ENCODE measurements at regions of chr1 and their contacts with region 1.

Region 1: GRCh38 chr1:28359592-28360239 is 9.8 kb upstream of the PHACTR4 start:
- DNase-seq: peak in 1 of 2 experiments; percentile 76
- H3K4me3 ChIP-seq: no peak overlapping the region
- H3K27ac ChIP-seq: no peak overlapping the region
- H3K4me1 ChIP-seq: peaks cover 0 to 3% (median 0%) of the 10 kb centered on the region in 4 experiments; a peak in 1 of 7 replicates
- H3K27me3 ChIP-seq: no peaks in the 10 kb centered on the region
- CTCF ChIP-seq: peak in 2 of 3 experiments; percentile 54 to 66; a peak in 2 of 4 replicates
- EP300 ChIP-seq: no peak
- POLR2A ChIP-seq: no peak
- RAD21 ChIP-seq: peak; percentile 64 to 71

Region 2: DNA sequence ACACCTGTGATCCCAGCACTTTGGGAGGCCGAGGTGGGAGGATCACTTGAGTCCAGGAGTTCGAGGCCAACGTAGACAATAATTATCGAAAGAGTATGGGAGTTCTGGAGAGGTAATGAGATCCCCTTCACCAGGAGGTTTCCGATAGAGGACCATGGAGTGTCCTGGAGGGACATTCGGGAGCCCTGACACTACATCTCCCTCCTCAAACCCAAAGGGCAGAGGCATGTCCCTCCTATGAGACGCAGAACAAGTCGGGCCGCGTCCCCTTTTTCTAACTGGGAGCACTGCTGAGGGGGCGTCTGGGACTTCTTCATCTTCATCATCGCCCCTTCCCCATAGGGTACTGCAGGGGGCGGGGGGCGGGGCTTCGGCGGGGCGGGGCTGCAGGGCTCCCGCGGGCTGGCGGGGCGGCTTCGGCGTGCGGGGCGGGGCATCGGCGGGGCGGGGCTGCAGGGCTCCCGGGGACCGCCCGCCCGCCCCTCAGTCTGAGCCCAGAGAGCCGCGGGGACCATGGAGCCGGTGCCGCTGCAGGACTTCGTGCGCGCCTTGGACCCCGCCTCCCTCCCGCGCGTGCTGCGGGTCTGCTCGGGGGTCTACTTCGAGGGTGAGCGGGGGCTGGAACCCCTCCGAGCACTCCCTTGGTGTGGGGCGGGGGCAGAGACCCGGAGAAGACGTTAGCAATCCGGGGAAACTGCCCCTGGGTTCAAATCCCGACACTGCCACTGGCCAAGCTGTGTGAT is 487.5 kb before region 1 on chr1 and contains the start of gene THEMIS2:
- CTCF ChIA-PET with region 1: no interaction called
- POLR2A ChIA-PET with region 1: no interaction called
- DNase-seq: peak in 1 of 2 experiments; percentile 88
- H3K4me3 ChIP-seq: peak within 1 kb of the TSS; percentile 54 to 91 (median 84)
- H3K27ac ChIP-seq: no peak within 1 kb of the TSS
- H3K4me1 ChIP-seq: peaks cover 0 to 12% (median 8%) of the 10 kb centered on the region in 4 experiments; a peak in 6 of 7 replicates
- H3K27me3 ChIP-seq: peaks cover 0 to 6% (median 2%) of the 10 kb centered on the region in 4 experiments; a peak in 4 of 7 replicates
- CTCF ChIP-seq: no peak
- EP300 ChIP-seq: no peak
- POLR2A ChIP-seq: peak in 1 of 2 experiments; percentile 24; a peak in 1 of 3 replicates
- RAD21 ChIP-seq: no peak
- total RNA-seq, gene THEMIS2: 12.4 and 17.3 TPM in 2 replicates

Region 3: DNA sequence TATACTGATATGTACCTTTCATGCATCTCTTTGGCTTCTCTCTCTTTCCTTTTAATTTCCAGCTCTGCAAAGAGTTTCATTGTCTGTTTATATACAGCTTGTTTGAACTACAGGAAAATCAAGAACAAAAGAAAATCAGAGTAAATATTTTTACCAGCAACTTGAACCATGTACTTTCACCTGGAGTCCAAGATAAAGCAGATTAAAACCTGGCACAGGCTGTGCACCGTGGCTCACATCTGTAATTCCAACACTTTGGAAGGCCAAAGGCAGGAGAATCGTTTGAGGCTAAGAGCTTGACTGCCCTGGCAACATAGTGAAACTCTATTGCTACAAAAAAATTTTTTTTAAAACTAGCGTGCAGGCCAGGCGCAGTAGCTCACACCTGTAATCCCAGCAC is 154.5 kb before region 1 on chr1:
- CTCF ChIA-PET with region 1: no interaction called
- POLR2A ChIA-PET with region 1: no interaction called
- DNase-seq: no peak
- H3K4me3 ChIP-seq: no peak overlapping the region
- H3K27ac ChIP-seq: no peak overlapping the region
- H3K4me1 ChIP-seq: no peaks in the 10 kb centered on the region; a peak in 1 of 7 replicates
- H3K27me3 ChIP-seq: no peaks in the 10 kb centered on the region
- CTCF ChIP-seq: no peak
- EP300 ChIP-seq: no peak
- POLR2A ChIP-seq: no peak
- RAD21 ChIP-seq: no peak

Region 4: GRCh38 chr1:28341591-28341990 is 18.1 kb before region 1 on chr1:
- CTCF ChIA-PET with region 1: interaction called, 14 read pairs
- POLR2A ChIA-PET with region 1: interaction called, 3 read pairs
- DNase-seq: no peak
- H3K4me3 ChIP-seq: no peak overlapping the region
- H3K27ac ChIP-seq: no peak overlapping the region
- H3K4me1 ChIP-seq: no peaks in the 10 kb centered on the region
- H3K27me3 ChIP-seq: no peaks in the 10 kb centered on the region
- CTCF ChIP-seq: no peak
- EP300 ChIP-seq: no peak
- POLR2A ChIP-seq: no peak
- RAD21 ChIP-seq: no peak

Region 5: DNA sequence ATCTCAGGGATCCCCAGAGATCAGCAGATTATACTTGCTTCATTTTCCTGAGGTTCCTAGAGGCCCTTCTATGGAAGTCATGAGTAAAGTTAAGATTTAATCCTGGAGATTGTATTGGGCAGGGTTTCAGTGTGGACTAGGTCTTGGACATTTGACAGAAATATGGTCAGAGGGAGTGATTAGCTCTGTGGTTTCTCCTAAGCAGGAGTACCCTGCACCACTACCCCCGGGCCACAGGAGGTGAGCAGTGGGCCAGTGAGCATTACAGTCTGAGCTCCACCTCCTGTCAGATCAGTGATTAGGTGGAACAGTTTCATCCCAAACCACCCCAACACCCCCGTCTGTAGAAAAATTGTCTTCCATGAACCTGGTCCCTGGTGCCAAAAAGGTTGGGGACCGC is 53.0 kb after region 1 on chr1:
- CTCF ChIA-PET with region 1: interaction called, 10 read pairs
- POLR2A ChIA-PET with region 1: no interaction called
- DNase-seq: no peak
- H3K4me3 ChIP-seq: no peak overlapping the region
- H3K27ac ChIP-seq: no peak overlapping the region
- H3K4me1 ChIP-seq: peaks cover 1 to 8% (median 3%) of the 10 kb centered on the region in 4 experiments; a peak in 5 of 7 replicates
- H3K27me3 ChIP-seq: no peaks in the 10 kb centered on the region
- CTCF ChIP-seq: 0 out of 4 replicates have a peak, but pooled peaks of 1 of the 3 experiments have one; percentile 9
- EP300 ChIP-seq: no peak
- POLR2A ChIP-seq: no peak
- RAD21 ChIP-seq: no peak; a peak in 1 of 4 replicates

Region 6: GRCh38 chr1:28428012-28428411 is 68.3 kb after region 1 on chr1:
- CTCF ChIA-PET with region 1: no interaction called
- POLR2A ChIA-PET with region 1: no interaction called
- DNase-seq: no peak
- H3K4me3 ChIP-seq: no peak overlapping the region
- H3K27ac ChIP-seq: no peak overlapping the region
- H3K4me1 ChIP-seq: no peaks in the 10 kb centered on the region
- H3K27me3 ChIP-seq: no peaks in the 10 kb centered on the region
- CTCF ChIP-seq: no peak
- EP300 ChIP-seq: no peak
- POLR2A ChIP-seq: no peak
- RAD21 ChIP-seq: no peak